Activated CD8-positive, alpha-beta T cell treated with anti-CD3 and anti-CD28 coated beads for 36 hours (primary cell): ENCODE measurements at regions of chr7 and their contacts with region 1.

Region 1: GRCh38 chr7:47266131-47266706 is 315.7 kb downstream of the TNS3 start:
- DNase-seq: peak; percentile 56
- ATAC-seq: peak; percentile 73
- H3K4me3 Mint-ChIP-seq: no peak overlapping the region
- H3K27ac Mint-ChIP-seq: no peak overlapping the region
- H3K4me1 Mint-ChIP-seq: no peaks in the 10 kb centered on the region
- H3K27me3 Mint-ChIP-seq: no peaks in the 10 kb centered on the region
- CTCF ChIP-seq: peak; percentile 84

Region 2: DNA sequence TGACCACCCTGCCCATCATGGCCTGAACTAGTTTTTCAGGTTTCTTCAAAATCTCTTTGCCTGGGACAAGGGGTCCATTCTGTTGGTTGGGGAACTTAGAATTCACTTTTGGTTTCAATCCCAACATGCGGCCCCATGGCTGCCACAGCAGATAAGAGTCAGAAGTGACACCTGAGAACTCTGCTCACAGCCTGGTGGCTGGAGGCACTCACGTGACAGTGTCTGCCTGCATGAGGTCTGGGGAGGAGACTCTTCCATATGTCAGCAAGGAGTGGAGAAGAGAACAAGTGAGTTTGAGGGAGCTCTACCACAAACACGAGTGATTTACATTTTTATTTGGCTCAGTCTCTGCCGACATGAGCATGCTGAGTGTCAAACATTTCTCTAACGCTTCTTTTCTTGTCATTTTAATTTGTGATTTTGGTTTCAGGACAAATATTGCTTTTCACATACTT is 54.7 kb before region 1 on chr7:
- CTCF ChIA-PET with region 1: no interaction called
- POLR2A ChIA-PET with region 1: no interaction called
- intact Hi-C with region 1: no loop called
- DNase-seq: no peak
- ATAC-seq: no peak
- H3K4me3 Mint-ChIP-seq: no peak overlapping the region
- H3K27ac Mint-ChIP-seq: no peak overlapping the region
- H3K4me1 Mint-ChIP-seq: no peaks in the 10 kb centered on the region
- H3K27me3 Mint-ChIP-seq: no peaks in the 10 kb centered on the region
- CTCF ChIP-seq: no peak

Region 3: DNA sequence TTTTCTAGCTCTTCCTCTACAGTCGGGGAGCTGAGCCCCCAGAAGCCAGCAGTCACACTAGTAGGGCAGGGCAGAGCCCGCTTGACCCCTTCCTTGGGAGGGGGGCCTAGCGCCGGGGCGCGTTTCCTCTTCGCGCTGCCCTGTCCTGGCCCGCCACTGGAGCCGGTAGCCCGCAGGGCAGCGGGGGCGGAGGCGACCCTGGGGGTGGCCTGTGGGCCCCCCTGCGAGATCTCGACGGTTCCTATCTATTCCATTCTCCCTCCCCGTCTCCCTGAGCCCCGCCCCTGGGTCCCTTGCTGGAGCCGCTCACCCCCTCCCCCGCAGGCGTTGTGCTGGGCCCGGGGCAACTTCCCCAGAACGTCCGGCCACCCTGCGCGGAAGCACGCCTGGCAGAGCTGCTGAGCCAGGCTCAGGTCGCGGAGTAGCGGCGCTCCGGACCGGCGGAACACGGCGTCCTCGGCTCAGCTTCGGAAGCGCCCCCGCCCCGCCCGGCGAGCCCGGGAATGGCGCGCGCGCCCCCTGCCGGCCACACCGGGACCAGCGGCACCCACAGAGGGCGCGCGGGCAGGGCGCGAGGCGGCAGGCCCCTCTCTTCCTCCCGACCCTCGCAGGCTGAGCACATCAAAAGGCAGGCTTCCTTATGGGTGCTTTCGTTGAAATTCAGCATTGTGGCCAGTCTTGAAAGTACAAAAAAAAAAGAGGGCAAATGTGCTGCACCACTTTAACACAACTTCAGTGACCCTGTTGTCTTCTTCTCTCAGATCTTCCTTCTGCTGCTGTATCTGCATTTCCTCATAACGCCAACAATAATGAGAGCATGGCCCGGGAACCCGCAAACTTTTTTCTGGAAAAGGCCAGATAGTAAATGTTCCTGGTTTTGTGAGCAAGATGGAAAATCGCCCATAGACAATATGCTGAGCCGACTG is 11.9 kb before region 1 on chr7:
- CTCF ChIA-PET with region 1: interaction called, 16 read pairs
- POLR2A ChIA-PET with region 1: no interaction called
- intact Hi-C with region 1: no loop called
- DNase-seq: peak; percentile 58
- ATAC-seq: peak; percentile 87
- H3K4me3 Mint-ChIP-seq: peak overlapping the region; percentile 44
- H3K27ac Mint-ChIP-seq: no peak overlapping the region
- H3K4me1 Mint-ChIP-seq: peaks cover 3% of the 10 kb centered on the region
- H3K27me3 Mint-ChIP-seq: peaks cover 41% of the 10 kb centered on the region
- CTCF ChIP-seq: peak; percentile 89

Region 4: GRCh38 chr7:47422611-47423010 is 156.4 kb after region 1 on chr7:
- CTCF ChIA-PET with region 1: no interaction called
- POLR2A ChIA-PET with region 1: no interaction called
- intact Hi-C with region 1: no loop called
- DNase-seq: no peak
- ATAC-seq: no peak
- H3K4me3 Mint-ChIP-seq: no peak overlapping the region
- H3K27ac Mint-ChIP-seq: no peak overlapping the region
- H3K4me1 Mint-ChIP-seq: no peaks in the 10 kb centered on the region
- H3K27me3 Mint-ChIP-seq: peaks cover 1% of the 10 kb centered on the region
- CTCF ChIP-seq: no peak

Region 5: DNA sequence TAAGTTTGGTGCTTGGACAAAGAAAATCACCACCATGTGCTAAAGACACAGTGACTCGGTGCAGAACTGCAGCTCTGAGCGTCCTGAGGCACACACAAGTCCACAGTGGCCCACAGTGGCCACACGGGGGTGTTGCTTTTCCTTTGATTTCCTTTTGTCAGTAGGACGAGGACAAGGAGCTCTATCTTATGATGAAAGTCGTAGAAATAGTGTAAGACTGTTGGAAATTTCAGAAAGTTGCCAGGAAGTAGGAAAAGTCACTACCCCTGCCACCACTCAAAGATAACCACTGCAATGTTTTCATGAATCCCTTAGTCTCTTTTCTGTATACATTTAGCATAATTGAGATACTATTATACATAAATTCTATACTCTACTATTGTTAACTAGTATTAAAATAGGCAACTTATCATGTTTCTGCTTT is 169.7 kb after region 1 on chr7:
- CTCF ChIA-PET with region 1: no interaction called
- POLR2A ChIA-PET with region 1: no interaction called
- intact Hi-C with region 1: loop called (anchors 10 kb)
- DNase-seq: peak; percentile 16
- ATAC-seq: no peak
- H3K4me3 Mint-ChIP-seq: no peak overlapping the region
- H3K27ac Mint-ChIP-seq: no peak overlapping the region
- H3K4me1 Mint-ChIP-seq: no peaks in the 10 kb centered on the region
- H3K27me3 Mint-ChIP-seq: no peaks in the 10 kb centered on the region
- CTCF ChIP-seq: no peak

Region 6: DNA sequence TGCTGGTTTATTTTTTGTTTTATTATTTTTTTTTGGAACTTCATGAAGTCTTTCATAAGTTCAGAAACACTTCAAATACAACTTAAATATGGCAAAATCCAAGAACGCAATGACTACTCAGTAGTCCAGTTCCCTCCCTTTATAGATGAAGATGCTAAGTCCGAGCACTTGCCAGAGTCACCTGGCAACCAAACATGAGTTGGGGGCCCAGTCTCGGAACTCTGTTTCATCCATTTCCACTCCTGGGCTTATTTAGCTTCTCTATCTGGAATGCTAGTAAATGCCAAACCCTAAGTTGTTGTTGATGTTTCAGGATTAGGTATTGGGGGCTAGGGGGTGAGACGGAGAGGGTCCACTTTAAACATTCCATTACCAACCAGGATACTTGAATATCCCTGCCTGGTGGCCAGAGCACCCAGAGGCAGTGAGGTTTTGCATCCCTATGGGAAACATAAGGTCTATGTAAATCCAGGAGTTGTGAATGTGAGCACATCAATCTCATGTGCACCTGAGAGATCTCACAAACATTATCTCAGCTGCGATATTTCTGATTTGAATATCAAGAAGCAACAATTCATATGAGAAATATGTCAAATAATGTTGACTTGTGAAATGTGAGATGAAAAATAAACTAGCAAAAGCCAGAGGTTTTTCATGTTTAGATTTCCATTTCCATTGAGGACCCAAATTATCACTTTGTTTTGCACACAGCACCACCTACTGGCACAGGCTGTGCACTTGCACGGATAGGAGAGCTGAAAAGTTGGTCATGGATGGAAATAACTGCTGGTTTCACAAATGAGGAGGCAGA is 552.8 kb after region 1 on chr7:
- CTCF ChIA-PET with region 1: interaction called, 26 read pairs
- POLR2A ChIA-PET with region 1: no interaction called
- intact Hi-C with region 1: loop called (anchors 2 kb)
- DNase-seq: peak; percentile 67
- ATAC-seq: no peak
- H3K4me3 Mint-ChIP-seq: no peak overlapping the region
- H3K27ac Mint-ChIP-seq: no peak overlapping the region
- H3K4me1 Mint-ChIP-seq: no peaks in the 10 kb centered on the region
- H3K27me3 Mint-ChIP-seq: no peaks in the 10 kb centered on the region
- CTCF ChIP-seq: peak; percentile 93